CD4-positive, alpha-beta memory T cell (primary cell): ENCODE measurements at regions of chrX and their contacts with region 1.

Region 1: DNA sequence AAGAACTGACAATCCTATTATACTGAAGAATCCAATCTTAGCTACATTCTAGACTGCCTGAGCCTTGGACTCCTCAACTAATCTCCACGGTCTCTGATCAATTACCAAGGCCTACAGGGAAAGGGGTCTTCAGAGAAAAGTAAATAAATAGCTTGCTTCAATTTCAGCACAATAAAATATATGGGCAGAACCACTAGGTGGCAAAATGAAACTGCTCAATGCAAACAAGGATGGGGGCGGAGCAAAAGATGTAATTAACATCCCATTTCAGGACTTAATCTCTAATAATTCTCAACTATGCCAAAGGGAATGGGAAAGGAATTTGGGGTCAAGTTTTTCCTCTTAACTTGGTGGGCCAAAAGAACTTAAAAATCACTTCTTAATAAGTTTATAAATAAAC is 78.4 kb upstream of the MAP3K15 start:
- DNase-seq: peak in 4 of 5 donors; percentile 22 to 36 (median 34)
- H3K4me3 ChIP-seq: no peak overlapping the region
- H3K4me3 Mint-ChIP-seq: no peak overlapping the region
- H3K27ac ChIP-seq: no peak overlapping the region
- H3K27ac Mint-ChIP-seq: peak overlapping the region in 5 of 7 donors; percentile 3 to 39 (median 31)
- H3K4me1 ChIP-seq: no peaks in the 10 kb centered on the region
- H3K4me1 Mint-ChIP-seq: peaks cover 6 to 20% (median 17%) of the 10 kb centered on the region in 4 donors
- H3K27me3 ChIP-seq: no peaks in the 10 kb centered on the region
- H3K27me3 Mint-ChIP-seq: no peaks in the 10 kb centered on the region

Region 2: DNA sequence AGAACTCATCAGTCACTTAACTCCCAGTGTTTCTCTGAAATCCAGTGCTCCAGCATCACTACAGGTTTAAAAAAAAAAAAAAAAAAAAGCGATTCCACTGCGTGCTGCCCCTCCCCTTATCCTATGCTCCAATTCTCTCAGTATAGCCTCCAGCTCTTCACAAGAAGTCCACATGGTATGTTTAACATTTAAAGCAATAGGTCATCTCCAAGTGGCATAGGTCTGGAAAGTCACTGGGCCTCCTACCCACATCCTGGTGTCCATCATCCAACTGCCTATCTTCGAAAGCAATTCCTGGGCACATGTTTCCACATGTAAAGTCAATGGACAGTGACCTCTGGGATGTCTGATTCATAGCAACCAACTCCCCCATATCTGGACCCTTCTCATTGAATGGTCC is 11.9 kb before region 1 on chrX:
- CTCF ChIA-PET with region 1: no interaction called
- POLR2A ChIA-PET with region 1: no interaction called
- intact Hi-C with region 1: no loop called
- DNase-seq: no peak
- H3K4me3 ChIP-seq: no peak overlapping the region
- H3K4me3 Mint-ChIP-seq: no peak overlapping the region
- H3K27ac ChIP-seq: no peak overlapping the region
- H3K27ac Mint-ChIP-seq: peak overlapping the region in 3 of 7 donors; percentile 24 to 42 (median 35)
- H3K4me1 ChIP-seq: no peaks in the 10 kb centered on the region
- H3K4me1 Mint-ChIP-seq: peaks cover 6 to 12% (median 11%) of the 10 kb centered on the region in 4 donors
- H3K27me3 ChIP-seq: no peaks in the 10 kb centered on the region
- H3K27me3 Mint-ChIP-seq: no peaks in the 10 kb centered on the region

Region 3: GRCh38 chrX:19673375-19674040 is 79.8 kb after region 1 on chrX:
- CTCF ChIA-PET with region 1: no interaction called
- POLR2A ChIA-PET with region 1: no interaction called
- intact Hi-C with region 1: no loop called
- DNase-seq: no peak
- H3K4me3 ChIP-seq: no peak overlapping the region
- H3K4me3 Mint-ChIP-seq: peak overlapping the region in 7 of 8 donors; percentile 2 to 68 (median 55)
- H3K27ac ChIP-seq: no peak overlapping the region
- H3K27ac Mint-ChIP-seq: peak overlapping the region; percentile 10 to 86 (median 68)
- H3K4me1 ChIP-seq: peaks cover 50% of the 10 kb centered on the region
- H3K4me1 Mint-ChIP-seq: peaks cover 24 to 66% (median 51%) of the 10 kb centered on the region in 4 donors
- H3K27me3 ChIP-seq: no peaks in the 10 kb centered on the region
- H3K27me3 Mint-ChIP-seq: no peaks in the 10 kb centered on the region

Region 4: GRCh38 chrX:19990556-19991349 is 397.1 kb after region 1 on chrX and contains the start of gene BCLAF3:
- CTCF ChIA-PET with region 1: no interaction called
- POLR2A ChIA-PET with region 1: no interaction called
- intact Hi-C with region 1: loop called (anchors 2 kb)
- DNase-seq: peak; percentile 80 to 82 (median 81)
- H3K4me3 ChIP-seq: peak within 1 kb of the TSS in 1 of 2 donors; percentile 62
- H3K4me3 Mint-ChIP-seq: peak within 1 kb of the TSS; percentile 83 to 95 (median 90)
- H3K27ac ChIP-seq: peak within 1 kb of the TSS; percentile 70
- H3K27ac Mint-ChIP-seq: peak within 1 kb of the TSS; percentile 68 to 97 (median 94)
- H3K4me1 ChIP-seq: peaks cover 10% of the 10 kb centered on the region
- H3K4me1 Mint-ChIP-seq: peaks cover 10 to 31% (median 20%) of the 10 kb centered on the region in 4 donors
- H3K27me3 ChIP-seq: no peaks in the 10 kb centered on the region
- H3K27me3 Mint-ChIP-seq: no peaks in the 10 kb centered on the region
- total RNA-seq, gene BCLAF3: 12.6 to 15.0 TPM